ENCODE measurements at regions of chr6 and their contacts with region 1.

Region 1: DNA sequence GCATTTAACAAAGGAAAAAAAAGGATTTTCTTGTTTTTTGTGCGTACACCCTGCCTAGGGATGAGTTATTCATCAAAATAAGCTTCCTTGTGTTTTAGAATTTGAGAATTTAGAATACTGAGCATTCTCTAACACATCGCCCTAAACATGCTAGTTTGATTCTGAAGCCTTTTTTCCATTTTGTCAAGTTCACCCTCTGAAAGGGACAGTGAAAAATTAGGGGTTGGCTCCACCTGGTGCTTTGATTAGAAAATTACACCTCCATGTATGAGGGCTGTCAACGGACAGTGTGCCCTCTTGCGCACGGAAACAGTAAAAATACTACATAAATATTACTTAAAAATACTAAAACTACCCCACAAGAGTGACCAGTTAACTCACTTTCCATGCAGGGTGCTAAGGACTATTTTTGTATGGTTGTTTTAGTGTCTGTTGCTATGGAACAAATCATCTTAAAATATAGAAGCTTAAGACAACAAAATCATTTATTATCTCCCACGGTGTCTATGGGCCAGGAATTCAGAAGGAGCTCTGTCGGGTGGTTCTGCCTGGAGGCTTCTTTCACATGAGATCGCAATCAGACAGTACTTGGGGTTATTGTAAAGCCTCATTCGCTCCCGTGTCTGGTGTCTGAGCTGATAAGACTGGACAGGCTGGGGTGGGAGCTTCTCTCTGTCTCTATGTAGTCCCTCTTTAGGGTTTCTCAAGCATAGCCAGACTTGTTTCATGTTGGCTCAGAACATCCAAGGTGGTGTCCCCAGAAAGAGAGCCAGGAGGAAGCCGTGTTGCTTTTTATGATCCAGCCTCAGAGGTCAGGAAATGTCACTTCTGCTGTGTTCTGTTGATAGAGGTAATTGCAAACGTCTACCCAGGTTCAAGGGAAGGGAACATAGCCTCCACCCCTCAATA is 41.1 kb upstream of the TMEM170B start:
- DNase-seq: peak; percentile 63 to 73
- H3K4me3 ChIP-seq: no peak overlapping the region
- H3K27ac ChIP-seq: peak overlapping the region in 1 of 2 donors; percentile 10
- H3K4me1 ChIP-seq: peaks cover 0 to 14% (median 5%) of the 10 kb centered on the region in 4 donors
- H3K27me3 ChIP-seq: no peaks in the 10 kb centered on the region
- CTCF ChIP-seq: peak; percentile 92 to 98

Region 2: GRCh38 chr6:11144393-11144851 is 352.0 kb before region 1 on chr6:
- intact Hi-C with region 1: loop called (anchors 5 kb)
- DNase-seq: peak; percentile 73 to 85
- H3K4me3 ChIP-seq: no peak overlapping the region
- H3K27ac ChIP-seq: no peak overlapping the region
- H3K4me1 ChIP-seq: peaks cover 0 to 3% (median 0%) of the 10 kb centered on the region in 4 donors
- H3K27me3 ChIP-seq: no peaks in the 10 kb centered on the region
- CTCF ChIP-seq: peak; percentile 88 to 91

Region 3: DNA sequence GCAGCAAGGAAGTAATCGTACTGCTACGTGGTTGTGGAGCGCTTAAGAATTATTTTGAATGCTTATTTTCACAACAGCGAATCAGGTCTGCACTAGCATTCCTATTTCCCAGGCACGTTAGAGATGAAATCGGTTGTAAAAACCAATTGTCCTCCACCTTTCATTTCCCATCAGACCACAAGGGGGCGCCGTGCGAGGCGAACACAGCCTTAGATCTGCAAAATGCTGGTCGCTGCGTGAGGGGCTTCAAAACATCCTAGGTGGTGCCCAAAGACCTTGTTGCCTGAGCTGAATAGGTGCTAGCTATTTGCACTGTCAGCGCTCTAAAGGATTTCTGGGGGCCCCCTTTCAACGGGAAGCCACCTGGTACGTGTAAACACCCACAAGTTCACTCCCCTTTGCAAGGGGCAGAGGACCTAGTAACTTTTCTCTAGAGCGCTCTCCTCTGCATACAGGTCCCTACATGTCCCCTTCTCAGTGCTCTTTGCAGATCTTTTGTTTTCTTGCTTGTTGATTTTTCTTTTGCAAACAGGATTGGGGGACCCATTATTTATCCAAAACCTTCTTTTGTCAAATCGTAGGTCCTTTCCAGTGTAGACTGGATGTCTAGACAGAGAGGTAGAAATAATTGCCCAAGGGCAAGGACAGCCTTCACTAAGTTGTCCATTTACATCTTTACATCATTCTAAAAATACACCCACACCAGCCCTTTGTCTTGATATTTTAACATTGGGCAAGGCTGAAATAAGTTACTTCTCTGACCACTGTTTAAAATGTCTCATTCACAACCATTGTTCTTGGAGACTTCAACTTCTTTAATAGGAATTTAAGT is 323.7 kb before region 1 on chr6:
- intact Hi-C with region 1: loop called (anchors 5 kb)
- DNase-seq: peak; percentile 54 to 77
- H3K4me3 ChIP-seq: no peak overlapping the region
- H3K27ac ChIP-seq: no peak overlapping the region
- H3K4me1 ChIP-seq: peaks cover 0 to 7% (median 0%) of the 10 kb centered on the region in 4 donors
- H3K27me3 ChIP-seq: no peaks in the 10 kb centered on the region
- CTCF ChIP-seq: peak; percentile 84 to 86

Region 4: GRCh38 chr6:11241793-11242201 is 254.6 kb before region 1 on chr6:
- intact Hi-C with region 1: loop called (anchors 5 kb)
- DNase-seq: peak; percentile 81 to 87
- H3K4me3 ChIP-seq: no peak overlapping the region
- H3K27ac ChIP-seq: peak overlapping the region in 1 of 2 donors; percentile 44
- H3K4me1 ChIP-seq: peaks cover 0 to 45% (median 21%) of the 10 kb centered on the region in 4 donors
- H3K27me3 ChIP-seq: no peaks in the 10 kb centered on the region
- CTCF ChIP-seq: peak; percentile 80 to 83